B cell (primary cell): ENCODE measurements at regions of chr1 and their contacts with region 1.

Region 1: GRCh38 chr1:15617175-15617880 is at the start of gene DDI2:
- DNase-seq: peak; percentile 94
- ATAC-seq: peak; percentile 88
- H3K4me3 ChIP-seq: peak within 1 kb of the TSS; percentile 82 to 98 (median 90)
- H3K4me3 Mint-ChIP-seq: peak within 1 kb of the TSS; percentile 91
- H3K27ac ChIP-seq: peak within 1 kb of the TSS; percentile 88 to 92
- H3K27ac Mint-ChIP-seq: peak within 1 kb of the TSS; percentile 88
- H3K4me1 ChIP-seq: peaks cover 26 to 32% of the 10 kb centered on the region in 2 donors
- H3K4me1 Mint-ChIP-seq: peaks cover 35% of the 10 kb centered on the region
- H3K27me3 ChIP-seq: no peaks in the 10 kb centered on the region
- H3K27me3 Mint-ChIP-seq: no peaks in the 10 kb centered on the region
- CTCF ChIP-seq: no peak
- total RNA-seq, gene DDI2: 61.0 and 68.3 TPM in 2 replicates

Region 2: GRCh38 chr1:15337656-15338402 is 279.5 kb before region 1 on chr1:
- CTCF ChIA-PET with region 1: no interaction called
- POLR2A ChIA-PET with region 1: no interaction called
- intact Hi-C with region 1: no loop called
- DNase-seq: no peak
- ATAC-seq: no peak
- H3K4me3 ChIP-seq: no peak overlapping the region
- H3K4me3 Mint-ChIP-seq: no peak overlapping the region
- H3K27ac ChIP-seq: no peak overlapping the region
- H3K27ac Mint-ChIP-seq: no peak overlapping the region
- H3K4me1 ChIP-seq: peaks cover 0 to 3% of the 10 kb centered on the region in 2 donors
- H3K4me1 Mint-ChIP-seq: peaks cover 3% of the 10 kb centered on the region
- H3K27me3 ChIP-seq: peaks cover 0 to 3% (median 1%) of the 10 kb centered on the region in 4 experiments
- H3K27me3 Mint-ChIP-seq: peaks cover 43% of the 10 kb centered on the region
- CTCF ChIP-seq: no peak

Region 3: DNA sequence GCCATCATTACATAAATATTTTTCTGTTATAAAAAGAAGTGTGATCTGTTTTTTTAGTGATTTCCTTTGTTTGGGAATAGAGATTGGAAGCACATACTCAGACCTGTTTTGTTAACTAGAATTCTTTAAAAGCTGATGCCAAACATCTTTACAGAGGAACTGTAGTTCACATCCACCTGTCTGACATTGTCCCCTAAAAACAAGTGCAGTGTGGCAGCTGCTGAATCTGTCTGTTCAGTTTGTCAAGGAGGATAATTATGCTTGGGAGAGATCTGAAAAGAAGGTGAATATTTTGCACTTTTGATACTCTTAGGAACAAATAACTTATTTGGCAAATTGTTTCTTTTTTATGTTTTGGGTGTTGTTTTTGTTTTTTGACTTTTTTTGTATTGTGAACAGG is 46.1 kb before region 1 on chr1:
- CTCF ChIA-PET with region 1: interaction called, 3 read pairs
- POLR2A ChIA-PET with region 1: no interaction called
- intact Hi-C with region 1: loop called (anchors 2 kb)
- DNase-seq: no peak
- ATAC-seq: no peak
- H3K4me3 ChIP-seq: peak overlapping the region in 2 of 5 experiments; percentile 15 to 16
- H3K4me3 Mint-ChIP-seq: peak overlapping the region; percentile 83
- H3K27ac ChIP-seq: peak overlapping the region; percentile 58 to 66
- H3K27ac Mint-ChIP-seq: peak overlapping the region; percentile 95
- H3K4me1 ChIP-seq: peaks cover 22 to 27% of the 10 kb centered on the region in 2 donors
- H3K4me1 Mint-ChIP-seq: peaks cover 26% of the 10 kb centered on the region
- H3K27me3 ChIP-seq: no peaks in the 10 kb centered on the region
- H3K27me3 Mint-ChIP-seq: no peaks in the 10 kb centered on the region
- CTCF ChIP-seq: no peak